Activated CD4-positive, alpha-beta memory T cell treated with anti-CD3 and anti-CD28 coated beads, Interleukin-2, amount 10 ng/mL, durations not matched to agents 7 days and 5 days (primary cell): ENCODE measurements at regions of chr4 and their contacts with region 1.

Region 1: GRCh38 chr4:39638354-39639240 is at the start of gene SMIM14:
- DNase-seq: peak; percentile 90
- H3K4me3 Mint-ChIP-seq: peak within 1 kb of the TSS; percentile 84
- H3K27ac Mint-ChIP-seq: peak within 1 kb of the TSS; percentile 76
- H3K4me1 Mint-ChIP-seq: peaks cover 31% of the 10 kb centered on the region
- H3K27me3 Mint-ChIP-seq: peaks cover 3% of the 10 kb centered on the region
- total RNA-seq, gene SMIM14: 7.2 to 7.6 TPM

Region 2: DNA sequence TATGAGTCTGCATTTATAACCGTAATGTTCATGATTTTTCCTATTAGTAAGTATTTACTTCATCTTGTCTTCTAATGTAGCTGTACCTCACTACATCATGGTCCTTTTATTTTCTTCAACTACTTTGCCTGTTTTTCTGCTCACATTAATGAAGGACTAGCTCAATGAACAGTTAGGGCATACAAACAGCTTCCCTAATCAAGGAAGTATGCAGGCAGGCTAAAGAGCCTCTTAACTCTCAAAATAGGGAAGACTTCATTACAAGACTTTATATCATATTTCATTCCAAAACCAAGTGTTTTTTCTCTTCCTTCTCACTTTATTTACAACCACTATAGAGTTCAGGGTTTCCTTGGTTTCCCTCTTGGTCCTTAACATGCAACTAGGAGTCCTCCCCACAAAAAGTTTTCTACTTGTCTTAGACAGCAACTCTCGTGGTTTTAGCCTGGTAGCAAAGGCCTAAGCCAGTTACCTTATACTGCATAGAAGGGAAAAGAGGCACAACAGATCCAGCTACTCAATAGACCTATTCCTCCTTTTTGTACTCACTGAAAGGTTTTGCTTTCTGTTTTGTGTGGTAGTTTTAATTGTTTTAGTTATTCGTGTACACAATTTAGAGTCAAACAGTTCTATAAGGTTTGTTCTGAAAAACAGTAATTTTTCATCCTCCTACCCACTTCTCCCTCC is 40.8 kb before region 1 on chr4:
- CTCF ChIA-PET with region 1: no interaction called
- POLR2A ChIA-PET with region 1: no interaction called
- DNase-seq: no peak
- H3K4me3 Mint-ChIP-seq: no peak overlapping the region
- H3K27ac Mint-ChIP-seq: no peak overlapping the region
- H3K4me1 Mint-ChIP-seq: peaks cover 9% of the 10 kb centered on the region
- H3K27me3 Mint-ChIP-seq: no peaks in the 10 kb centered on the region

Region 3: GRCh38 chr4:39697740-39698423 is 59.3 kb after region 1 on chr4 and contains the start of gene UBE2K:
- CTCF ChIA-PET with region 1: interaction called, 6 read pairs
- POLR2A ChIA-PET with region 1: interaction called, 25 read pairs
- DNase-seq: peak; percentile 91
- H3K4me3 Mint-ChIP-seq: peak within 1 kb of the TSS; percentile 92
- H3K27ac Mint-ChIP-seq: peak within 1 kb of the TSS; percentile 97
- H3K4me1 Mint-ChIP-seq: peaks cover 35% of the 10 kb centered on the region
- H3K27me3 Mint-ChIP-seq: no peaks in the 10 kb centered on the region
- total RNA-seq, gene UBE2K: 82.3 to 86.5 TPM